ENCODE measurements at regions of chr17 and their contacts with region 1.

Region 1: GRCh38 chr17:82781894-82782274 is 30.0 kb downstream of the TBCD start:
- DNase-seq: peak; percentile 81
- H3K4me3 Mint-ChIP-seq: no peak overlapping the region
- H3K27ac Mint-ChIP-seq: no peak overlapping the region
- H3K4me1 Mint-ChIP-seq: peaks cover 8% of the 10 kb centered on the region
- H3K27me3 Mint-ChIP-seq: no peaks in the 10 kb centered on the region
- CTCF ChIP-seq: peak; percentile 98

Region 2: GRCh38 chr17:82702231-82702927 is 79.5 kb before region 1 on chr17:
- CTCF ChIA-PET with region 1: no interaction called
- POLR2A ChIA-PET with region 1: no interaction called
- intact Hi-C with region 1: no loop called
- DNase-seq: no peak
- H3K4me3 Mint-ChIP-seq: no peak overlapping the region
- H3K27ac Mint-ChIP-seq: no peak overlapping the region
- H3K4me1 Mint-ChIP-seq: no peaks in the 10 kb centered on the region
- H3K27me3 Mint-ChIP-seq: no peaks in the 10 kb centered on the region
- CTCF ChIP-seq: no peak

Region 3: DNA sequence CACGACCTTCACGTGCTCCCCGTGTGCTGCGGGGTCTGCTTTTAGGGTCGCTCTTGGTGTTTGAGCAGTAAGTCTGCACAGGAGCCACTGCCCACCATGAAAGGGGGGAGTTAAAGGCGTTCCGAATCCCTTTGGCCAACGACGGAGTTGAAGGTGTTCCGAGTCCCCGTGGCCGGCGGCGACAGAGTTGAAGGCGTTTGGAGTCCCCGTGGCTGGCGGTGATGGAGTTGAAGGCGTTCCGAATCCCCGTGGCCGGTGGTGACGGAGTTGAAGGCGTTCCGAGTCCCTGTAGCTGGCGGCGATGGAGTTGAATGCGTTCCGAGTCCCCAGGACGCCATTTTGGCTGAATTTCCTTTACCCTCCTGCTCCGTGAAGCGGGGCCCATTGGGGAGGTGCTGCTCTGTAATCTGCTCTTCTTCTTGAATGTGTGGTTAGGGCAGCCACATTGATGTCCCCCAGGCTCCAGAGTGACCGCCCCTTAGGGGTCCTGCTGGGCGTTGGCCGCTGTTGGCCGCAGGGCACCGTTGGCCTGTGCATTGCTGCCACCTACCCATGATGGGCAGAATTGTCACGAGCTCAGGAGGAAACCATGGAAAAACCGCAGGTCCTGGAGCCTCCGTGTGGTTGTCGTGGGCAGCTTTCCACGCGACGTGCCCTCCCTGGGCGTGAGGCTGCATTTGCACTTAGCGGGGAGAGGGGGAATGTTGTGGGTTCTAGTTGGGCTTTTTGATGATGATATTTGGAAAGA is 131.6 kb after region 1 on chr17:
- CTCF ChIA-PET with region 1: interaction called, 14 read pairs
- POLR2A ChIA-PET with region 1: no interaction called
- intact Hi-C with region 1: loop called (anchors 1 kb)
- DNase-seq: no peak
- H3K4me3 Mint-ChIP-seq: no peak overlapping the region
- H3K27ac Mint-ChIP-seq: no peak overlapping the region
- H3K4me1 Mint-ChIP-seq: no peaks in the 10 kb centered on the region
- H3K27me3 Mint-ChIP-seq: no peaks in the 10 kb centered on the region
- CTCF ChIP-seq: peak; percentile 4

Region 4: DNA sequence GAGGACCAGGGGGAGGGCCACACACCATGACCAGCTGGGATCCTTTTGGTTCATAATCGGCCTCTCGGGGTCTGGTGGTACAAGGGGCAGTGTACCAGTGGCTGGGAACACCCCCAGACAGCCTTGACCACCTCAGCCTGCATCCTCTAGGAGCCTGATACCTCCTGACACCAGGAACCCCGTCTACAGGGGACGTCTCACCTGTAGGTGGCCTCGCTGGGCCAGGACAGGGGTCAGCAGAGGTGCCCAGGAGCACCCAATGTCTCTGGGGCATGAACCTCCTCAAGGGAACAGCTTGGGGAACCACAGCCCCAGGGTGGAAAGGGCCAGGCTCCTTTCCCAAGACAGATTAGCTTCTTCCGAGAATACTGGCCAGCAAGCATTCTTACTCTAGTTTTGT is 295.0 kb after region 1 on chr17:
- CTCF ChIA-PET with region 1: interaction called, 5 read pairs
- POLR2A ChIA-PET with region 1: no interaction called
- intact Hi-C with region 1: loop called (anchors 2 kb)
- DNase-seq: peak; percentile 53
- H3K4me3 Mint-ChIP-seq: no peak overlapping the region
- H3K27ac Mint-ChIP-seq: no peak overlapping the region
- H3K4me1 Mint-ChIP-seq: no peaks in the 10 kb centered on the region
- H3K27me3 Mint-ChIP-seq: no peaks in the 10 kb centered on the region
- CTCF ChIP-seq: peak; percentile 38

Measured in MCF 10A (cell line).